ENCODE measurements at regions of chr14 and their contacts with region 1.

Region 1: DNA sequence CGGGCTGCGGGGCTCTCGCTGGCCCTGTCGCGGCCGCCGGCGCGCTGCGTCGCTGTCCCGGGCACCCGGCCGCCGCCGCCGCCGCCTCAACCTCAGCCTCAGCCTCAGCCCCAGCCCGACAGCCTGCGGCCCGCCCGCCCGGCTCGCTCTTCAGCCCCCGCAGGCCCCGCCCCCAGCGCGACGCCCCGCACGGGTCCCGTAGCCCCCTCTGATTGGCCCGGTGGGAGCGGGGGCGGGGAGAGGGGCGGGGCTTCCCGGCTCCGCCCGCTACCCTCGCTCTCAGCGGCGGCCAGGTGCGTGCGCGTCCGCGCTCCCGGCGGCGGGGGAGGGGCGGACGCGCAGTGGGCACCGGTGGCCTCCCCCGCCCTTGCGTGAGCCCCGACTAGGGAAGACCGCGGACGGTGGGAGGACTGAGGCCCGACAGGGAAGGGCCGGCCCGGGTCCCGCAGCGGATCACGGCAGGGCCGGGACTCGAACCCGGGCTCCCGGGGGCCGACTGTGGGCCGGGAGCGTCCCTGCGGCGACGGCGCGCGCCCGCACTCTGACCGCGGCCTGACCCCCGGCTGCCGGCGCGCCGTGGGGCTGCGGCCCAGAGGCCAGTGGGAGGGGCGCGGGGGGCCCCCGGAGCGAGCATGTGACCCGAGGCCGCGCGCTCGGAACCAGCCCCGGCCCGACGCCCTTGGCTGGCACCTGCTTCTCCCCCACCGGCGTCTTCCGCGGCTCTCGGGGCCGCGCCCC is at the start of gene PPP1R13B:
- DNase-seq: peak; percentile 88 to 89
- ATAC-seq: peak; percentile 88 to 90
- H3K4me3 ChIP-seq: peak within 1 kb of the TSS; percentile 60 to 86 (median 76)
- H3K27ac ChIP-seq: peak within 1 kb of the TSS; percentile 73 to 87 (median 84)
- H3K4me1 ChIP-seq: peaks cover 12 to 14% of the 10 kb centered on the region in 2 donors
- H3K27me3 ChIP-seq: no peaks in the 10 kb centered on the region
- CTCF ChIP-seq: peak in 2 of 5 experiments; percentile 10 to 24
- POLR2A ChIP-seq: peak; percentile 80 to 85
- total RNA-seq, gene PPP1R13B: 10.4 to 24.6 (median 11.8) TPM

Region 2: DNA sequence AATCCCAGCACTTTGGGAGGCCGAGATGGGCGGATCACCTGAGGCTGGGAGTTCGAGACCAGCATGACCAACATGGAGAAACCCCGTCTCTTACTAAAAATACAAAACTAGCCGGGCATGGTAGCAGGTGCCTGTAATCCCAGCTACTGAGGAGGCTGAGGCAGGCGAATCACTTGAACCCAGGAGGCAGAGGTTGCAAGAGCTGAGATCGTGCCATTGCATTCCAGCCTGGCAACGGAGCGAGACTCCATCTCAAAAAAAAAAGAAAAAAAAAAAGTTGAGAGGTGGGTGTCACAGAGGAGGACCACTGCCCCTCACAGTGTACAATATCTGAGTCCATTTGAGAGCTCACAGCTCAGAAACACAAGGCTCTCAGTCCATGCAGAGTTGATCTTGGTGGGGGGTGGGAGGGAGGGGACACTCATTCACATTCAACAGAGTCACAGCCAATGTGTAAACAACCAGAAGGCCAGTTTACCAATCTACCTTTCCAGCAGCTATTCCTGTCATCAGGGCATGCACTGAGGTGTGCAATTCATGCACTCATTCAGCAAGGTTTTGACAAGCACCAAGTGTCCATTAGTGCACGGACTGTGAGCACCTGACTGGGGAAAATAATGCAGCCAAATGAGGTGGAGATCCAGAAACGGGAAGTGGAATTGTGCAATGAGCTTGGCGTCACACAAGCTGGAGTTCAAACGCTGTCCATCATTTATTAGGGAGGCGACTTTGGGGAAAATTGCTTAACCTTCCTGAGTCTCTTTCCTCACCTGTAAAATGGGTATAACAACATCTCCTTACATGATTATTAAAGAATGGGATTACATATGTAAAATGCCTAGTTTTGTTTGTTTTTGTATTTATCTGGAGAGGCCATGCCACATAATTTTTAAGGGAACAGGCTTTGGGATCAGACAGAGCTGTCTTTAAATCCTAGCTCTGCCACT is 517.9 kb before region 1 on chr14:
- in situ Hi-C with region 1: no loop called
- intact Hi-C with region 1: no loop called
- DNase-seq: no peak
- ATAC-seq: no peak
- H3K4me3 ChIP-seq: no peak overlapping the region
- H3K27ac ChIP-seq: no peak overlapping the region
- H3K4me1 ChIP-seq: peaks cover 11 to 13% of the 10 kb centered on the region in 2 donors
- H3K27me3 ChIP-seq: no peaks in the 10 kb centered on the region
- CTCF ChIP-seq: no peak
- POLR2A ChIP-seq: no peak

Region 3: DNA sequence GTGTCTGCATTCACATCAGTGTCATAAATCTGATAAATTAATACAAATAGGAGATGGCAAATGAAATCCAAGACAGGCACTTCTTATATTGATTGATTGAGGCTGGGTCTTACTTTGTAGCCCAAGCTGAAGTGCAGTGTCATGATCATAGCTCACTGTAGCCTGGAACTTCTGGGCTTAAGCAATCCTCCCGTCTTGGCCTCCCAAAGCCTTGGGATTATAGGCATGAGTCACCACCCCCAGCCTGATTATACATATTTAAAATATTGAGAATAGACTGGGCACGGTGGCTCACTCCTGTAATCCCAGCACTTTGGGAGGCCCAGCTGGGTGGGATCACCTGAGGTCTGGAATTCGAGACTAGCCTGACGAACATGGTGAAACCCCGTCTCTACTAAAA is 411.1 kb before region 1 on chr14:
- in situ Hi-C with region 1: no loop called
- intact Hi-C with region 1: no loop called
- DNase-seq: no peak
- ATAC-seq: no peak
- H3K4me3 ChIP-seq: no peak overlapping the region
- H3K27ac ChIP-seq: no peak overlapping the region
- H3K4me1 ChIP-seq: peaks cover 35 to 37% of the 10 kb centered on the region in 2 donors
- H3K27me3 ChIP-seq: no peaks in the 10 kb centered on the region
- CTCF ChIP-seq: no peak
- POLR2A ChIP-seq: no peak

Region 4: DNA sequence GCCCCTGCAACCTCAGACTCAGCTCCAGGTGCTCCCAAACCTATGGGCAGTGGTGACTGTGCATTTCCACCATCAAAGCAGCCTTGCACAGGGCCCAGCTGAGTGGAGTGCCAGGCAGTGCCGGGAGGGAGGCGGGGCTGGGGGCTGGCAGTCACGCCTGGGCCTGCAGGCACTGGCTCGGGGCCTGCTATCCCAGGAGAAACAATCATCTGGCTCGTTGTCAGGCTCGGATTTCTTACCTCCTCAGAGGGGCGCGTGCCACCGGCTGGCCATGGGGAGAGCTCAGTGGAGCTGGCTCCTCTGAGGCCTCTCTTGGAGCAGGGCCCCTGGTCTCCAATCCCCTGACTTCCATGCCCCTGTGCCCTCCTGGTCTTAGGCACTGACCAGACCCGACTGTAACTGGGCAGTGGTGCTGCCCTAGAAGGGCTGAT is 19.9 kb after region 1 on chr14:
- in situ Hi-C with region 1: no loop called
- intact Hi-C with region 1: no loop called
- DNase-seq: no peak
- ATAC-seq: peak; percentile 31 to 53
- H3K4me3 ChIP-seq: no peak overlapping the region
- H3K27ac ChIP-seq: peak overlapping the region in 1 of 4 donors; percentile 39
- H3K4me1 ChIP-seq: peaks cover 0 to 3% of the 10 kb centered on the region in 2 donors
- H3K27me3 ChIP-seq: no peaks in the 10 kb centered on the region
- CTCF ChIP-seq: no peak
- POLR2A ChIP-seq: no peak

Region 5: GRCh38 chr14:103920981-103921854 is 73.6 kb after region 1 on chr14:
- in situ Hi-C with region 1: no loop called
- intact Hi-C with region 1: loop called (anchors 2 kb)
- DNase-seq: peak; percentile 80 to 91
- ATAC-seq: peak; percentile 98 to 99
- H3K4me3 ChIP-seq: peak overlapping the region; percentile 75 to 98 (median 88)
- H3K27ac ChIP-seq: peak overlapping the region; percentile 83 to 93 (median 90)
- H3K4me1 ChIP-seq: peaks cover 19 to 23% of the 10 kb centered on the region in 2 donors
- H3K27me3 ChIP-seq: peaks cover 0 to 5% (median 0%) of the 10 kb centered on the region in 3 donors
- CTCF ChIP-seq: peak; percentile 92 to 99 (median 94)
- POLR2A ChIP-seq: peak; percentile 43 to 70